IMR-90 (cell line): ENCODE measurements at regions of chr1 and their contacts with region 1.

Region 1: GRCh38 chr1:200610846-200611245 is 9.7 kb downstream of the KIF14 start:
- DNase-seq: peak; percentile 58
- ATAC-seq: peak; percentile 72
- H3K4me3 ChIP-seq: no peak overlapping the region
- H3K27ac ChIP-seq: no peak overlapping the region
- H3K4me1 ChIP-seq: no peaks in the 10 kb centered on the region
- H3K27me3 ChIP-seq: no peaks in the 10 kb centered on the region
- CTCF ChIP-seq: no peak
- POLR2A ChIP-seq: no peak
- RAD21 ChIP-seq: no peak

Region 2: GRCh38 chr1:200525090-200525987 is 85.5 kb before region 1 on chr1:
- CTCF ChIA-PET with region 1: no interaction called
- POLR2A ChIA-PET with region 1: interaction called, 11 read pairs
- dilution Hi-C with region 1: no loop called
- in situ Hi-C with region 1: no loop called
- intact Hi-C with region 1: no loop called
- DNase-seq: peak; percentile 68
- ATAC-seq: peak; percentile 57
- H3K4me3 ChIP-seq: no peak overlapping the region
- H3K27ac ChIP-seq: no peak overlapping the region
- H3K4me1 ChIP-seq: peaks cover 5% of the 10 kb centered on the region; the same call in 1 of the 2 replicates
- H3K27me3 ChIP-seq: no peaks in the 10 kb centered on the region
- CTCF ChIP-seq: no peak
- POLR2A ChIP-seq: no peak
- RAD21 ChIP-seq: no peak

Region 3: DNA sequence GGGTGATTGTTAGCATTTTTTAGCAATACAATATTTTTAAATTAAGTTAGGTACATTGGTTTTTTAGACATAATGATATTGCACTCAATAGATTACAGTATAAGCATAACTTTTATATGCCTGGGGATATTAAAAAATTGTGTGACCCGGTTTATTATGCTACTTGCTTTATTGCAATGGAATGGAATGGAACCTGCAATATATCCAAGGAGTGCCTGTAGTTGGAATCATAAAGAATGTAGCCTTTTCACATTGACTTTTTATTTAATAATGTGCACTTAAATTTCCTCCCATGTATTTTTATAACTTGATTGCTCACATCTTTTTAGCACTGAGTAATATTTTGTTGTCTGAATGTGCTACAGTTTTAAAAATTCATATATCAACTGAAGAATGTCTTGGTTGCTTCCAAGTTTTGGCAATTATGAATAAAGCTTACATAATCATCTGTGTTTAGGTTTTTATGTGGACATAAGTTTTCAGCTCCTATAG is 177.1 kb after region 1 on chr1:
- CTCF ChIA-PET with region 1: interaction called, 11 read pairs
- POLR2A ChIA-PET with region 1: no interaction called
- dilution Hi-C with region 1: no loop called
- in situ Hi-C with region 1: no loop called
- intact Hi-C with region 1: no loop called
- DNase-seq: no peak
- ATAC-seq: no peak
- H3K4me3 ChIP-seq: no peak overlapping the region
- H3K27ac ChIP-seq: no peak overlapping the region
- H3K4me1 ChIP-seq: peaks cover 5% of the 10 kb centered on the region; the same call in 1 of the 2 replicates
- H3K27me3 ChIP-seq: no peaks in the 10 kb centered on the region
- CTCF ChIP-seq: no peak
- POLR2A ChIP-seq: no peak
- RAD21 ChIP-seq: no peak

Region 4: GRCh38 chr1:200925831-200926230 is 315.0 kb after region 1 on chr1:
- CTCF ChIA-PET with region 1: no interaction called
- POLR2A ChIA-PET with region 1: no interaction called
- dilution Hi-C with region 1: no loop called
- in situ Hi-C with region 1: no loop called
- intact Hi-C with region 1: no loop called
- DNase-seq: peak; percentile 23
- ATAC-seq: no peak
- H3K4me3 ChIP-seq: no peak overlapping the region
- H3K27ac ChIP-seq: no peak overlapping the region
- H3K4me1 ChIP-seq: no peaks in the 10 kb centered on the region
- H3K27me3 ChIP-seq: peaks cover 27% of the 10 kb centered on the region
- CTCF ChIP-seq: no peak
- POLR2A ChIP-seq: no peak
- RAD21 ChIP-seq: no peak